ENCODE measurements at regions of chr4 and their contacts with region 1.

Region 1: DNA sequence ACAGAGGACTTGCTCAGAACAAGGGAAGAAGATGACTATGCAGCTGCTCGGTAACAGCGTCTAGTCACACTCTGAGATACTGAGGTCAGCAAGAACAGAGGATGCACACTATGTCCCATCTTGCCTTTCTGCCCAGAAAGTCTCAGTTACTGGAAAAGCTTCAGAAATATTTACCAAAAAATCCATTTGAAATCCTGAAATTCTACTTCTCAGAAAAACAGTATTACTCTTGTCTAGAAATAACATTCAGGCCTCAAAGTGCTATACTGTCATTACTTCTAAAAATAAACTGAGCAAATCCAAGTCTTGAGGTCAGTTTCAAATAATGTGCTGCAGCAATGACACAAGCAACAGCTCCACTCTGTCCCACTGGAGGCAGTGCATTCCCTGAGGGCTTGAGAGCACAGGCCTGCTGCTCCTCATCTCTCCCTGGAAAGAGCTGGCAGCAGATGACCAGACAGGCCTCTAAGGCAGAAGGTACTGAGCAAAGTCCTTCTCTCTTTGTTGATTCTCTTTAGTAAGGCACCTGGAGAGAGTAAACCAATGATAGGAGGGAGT is 76.9 kb downstream of the CAMK2D start:
- DNase-seq: no peak
- ATAC-seq: peak; percentile 39
- H3K4me3 Mint-ChIP-seq: peak overlapping the region; percentile 51
- H3K27ac Mint-ChIP-seq: peak overlapping the region; percentile 84
- H3K4me1 Mint-ChIP-seq: peaks cover 65% of the 10 kb centered on the region
- H3K27me3 Mint-ChIP-seq: no peaks in the 10 kb centered on the region

Region 2: GRCh38 chr4:113657586-113658233 is 26.9 kb before region 1 on chr4:
- CTCF ChIA-PET with region 1: no interaction called
- POLR2A ChIA-PET with region 1: no interaction called
- DNase-seq: no peak
- ATAC-seq: no peak
- H3K4me3 Mint-ChIP-seq: no peak overlapping the region
- H3K27ac Mint-ChIP-seq: no peak overlapping the region
- H3K4me1 Mint-ChIP-seq: peaks cover 4% of the 10 kb centered on the region
- H3K27me3 Mint-ChIP-seq: no peaks in the 10 kb centered on the region

Region 3: GRCh38 chr4:113761620-113762185 is 77.1 kb after region 1 on chr4 and contains the start of gene CAMK2D:
- CTCF ChIA-PET with region 1: interaction called, 4 read pairs
- POLR2A ChIA-PET with region 1: interaction called, 10 read pairs
- DNase-seq: peak; percentile 86
- ATAC-seq: peak; percentile 53
- H3K4me3 Mint-ChIP-seq: peak within 1 kb of the TSS; percentile 93
- H3K27ac Mint-ChIP-seq: peak within 1 kb of the TSS; percentile 100
- H3K4me1 Mint-ChIP-seq: peaks cover 33% of the 10 kb centered on the region
- H3K27me3 Mint-ChIP-seq: no peaks in the 10 kb centered on the region
- total RNA-seq, gene CAMK2D: 30.7 to 31.1 TPM